Activated CD4-positive, alpha-beta T cell treated with anti-CD3 and anti-CD28 coated beads, Interleukin-2, amount 10 ng/mL, durations not matched to agents 24 days and 14 days (primary cell): ENCODE measurements at regions of chr13 and their contacts with region 1.

Region 1: DNA sequence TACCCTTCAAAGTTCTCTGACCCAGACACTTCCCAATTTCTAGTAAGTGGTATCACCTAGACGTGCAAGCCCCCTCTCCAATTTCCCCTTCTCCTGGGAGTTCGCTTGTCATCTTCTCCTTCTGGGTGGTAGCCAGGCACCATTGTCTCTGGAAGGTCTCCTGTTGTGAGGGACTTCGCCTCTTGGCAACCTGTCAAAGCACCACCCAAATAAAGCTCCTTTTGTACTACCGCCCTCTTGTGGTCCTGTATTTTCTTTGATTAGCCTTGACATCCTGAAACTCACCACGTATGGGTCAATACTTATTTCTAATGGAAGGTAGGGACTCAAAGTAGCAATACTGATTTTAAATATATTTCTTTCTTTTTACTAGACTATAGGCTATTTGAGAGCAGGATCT is 8.2 kb downstream of the GPC5 start:
- DNase-seq: peak; percentile 82
- H3K4me3 Mint-ChIP-seq: no peak overlapping the region
- H3K27ac Mint-ChIP-seq: no peak overlapping the region
- H3K4me1 Mint-ChIP-seq: no peaks in the 10 kb centered on the region
- H3K27me3 Mint-ChIP-seq: peaks cover 45% of the 10 kb centered on the region

Region 2: DNA sequence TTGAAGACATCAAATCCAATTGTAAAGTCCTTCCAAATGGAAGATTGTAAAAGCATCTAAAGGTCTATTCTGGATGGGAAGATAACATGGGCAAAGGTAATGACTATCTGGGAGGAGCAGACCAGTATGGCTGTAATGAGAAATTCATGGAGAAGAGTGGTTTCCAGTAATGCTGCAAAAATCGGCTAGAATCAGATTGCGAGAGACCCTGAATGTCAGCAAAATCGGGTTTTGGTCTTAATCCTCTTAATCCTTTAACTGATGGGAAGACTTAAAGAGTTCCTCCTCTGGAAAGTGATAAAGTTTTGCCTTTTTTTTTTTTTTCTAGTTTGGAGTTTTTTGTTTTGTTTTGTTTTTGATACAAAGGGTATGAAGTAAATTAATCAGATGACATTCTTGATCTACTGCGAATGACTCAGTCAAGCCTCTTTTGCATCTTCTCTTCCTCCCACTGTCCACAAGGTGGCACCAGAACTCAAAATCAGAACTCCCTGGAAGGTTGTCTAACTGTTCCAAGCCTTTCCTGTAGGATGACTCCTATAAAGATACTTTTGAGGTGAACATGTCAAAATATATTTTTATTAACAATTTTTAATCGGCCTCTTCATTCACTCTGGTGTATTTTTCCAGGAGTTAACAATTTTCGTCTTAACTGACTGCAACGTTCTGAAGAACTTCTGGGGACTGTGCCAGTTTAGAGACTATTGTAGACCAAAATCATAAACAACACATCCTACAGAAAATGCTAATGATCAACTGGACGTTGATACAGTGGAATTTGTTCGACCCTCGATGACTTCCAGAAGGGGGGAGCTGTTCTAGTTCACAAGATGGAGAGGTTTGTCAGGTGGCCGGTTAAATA is 272.4 kb before region 1 on chr13:
- intact Hi-C with region 1: loop called (anchors 1 kb)
- DNase-seq: peak; percentile 74
- H3K4me3 Mint-ChIP-seq: no peak overlapping the region
- H3K27ac Mint-ChIP-seq: no peak overlapping the region
- H3K4me1 Mint-ChIP-seq: no peaks in the 10 kb centered on the region
- H3K27me3 Mint-ChIP-seq: no peaks in the 10 kb centered on the region

Region 3: DNA sequence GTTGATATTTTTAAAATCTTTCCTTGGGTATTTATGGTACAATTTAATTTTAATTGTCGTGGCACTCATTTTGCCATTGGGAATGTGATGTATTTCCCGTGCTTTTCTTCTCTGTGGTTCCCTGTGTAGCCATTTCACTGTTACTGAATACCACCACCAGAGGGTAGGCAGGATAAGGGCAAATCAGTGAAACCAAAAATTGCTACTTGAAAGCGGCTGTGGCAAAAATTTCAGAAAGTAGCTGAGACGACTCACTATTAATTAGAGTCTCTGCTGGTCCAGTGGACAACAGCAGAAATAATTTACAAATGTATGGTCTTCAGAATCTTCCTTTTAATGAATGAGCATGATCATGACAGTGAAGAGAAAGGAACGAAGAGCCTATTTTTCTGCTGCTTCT is 93.5 kb before region 1 on chr13:
- intact Hi-C with region 1: loop called (anchors 1 kb)
- DNase-seq: peak; percentile 77
- H3K4me3 Mint-ChIP-seq: peak overlapping the region; percentile 52
- H3K27ac Mint-ChIP-seq: no peak overlapping the region
- H3K4me1 Mint-ChIP-seq: peaks cover 22% of the 10 kb centered on the region
- H3K27me3 Mint-ChIP-seq: peaks cover 14% of the 10 kb centered on the region

Region 4: DNA sequence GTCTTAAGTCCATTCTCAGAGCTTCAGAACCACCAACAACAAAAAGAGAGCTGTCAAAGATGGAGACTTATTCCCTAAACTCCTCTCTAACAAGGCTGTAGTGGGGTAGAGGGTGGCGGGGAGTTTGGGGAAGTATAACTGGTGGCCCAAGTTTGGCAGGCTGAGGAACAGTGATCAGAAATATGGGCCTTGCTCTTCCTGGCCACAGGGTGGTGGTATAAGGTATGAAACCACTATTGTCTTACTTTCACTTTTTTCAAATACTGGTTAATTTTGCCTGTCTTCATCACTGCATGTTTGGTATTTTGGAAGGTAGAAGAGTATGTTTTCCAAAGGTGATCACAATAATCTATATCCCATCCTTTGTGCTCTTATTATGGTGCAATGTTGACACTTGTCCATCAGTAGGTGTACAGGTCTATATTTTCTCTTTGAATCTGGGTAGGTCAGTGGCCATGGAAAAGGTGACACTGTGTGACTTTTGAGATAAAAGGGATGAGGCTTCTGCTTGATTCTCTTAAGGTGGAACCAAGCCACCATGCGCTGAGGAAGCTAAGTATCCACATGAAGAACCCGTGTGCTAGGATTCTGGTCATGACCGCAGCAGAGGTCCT is 31.4 kb before region 1 on chr13:
- intact Hi-C with region 1: loop called (anchors 1 kb)
- DNase-seq: peak; percentile 69
- H3K4me3 Mint-ChIP-seq: no peak overlapping the region
- H3K27ac Mint-ChIP-seq: no peak overlapping the region
- H3K4me1 Mint-ChIP-seq: peaks cover 2% of the 10 kb centered on the region
- H3K27me3 Mint-ChIP-seq: peaks cover 2% of the 10 kb centered on the region

Region 5: DNA sequence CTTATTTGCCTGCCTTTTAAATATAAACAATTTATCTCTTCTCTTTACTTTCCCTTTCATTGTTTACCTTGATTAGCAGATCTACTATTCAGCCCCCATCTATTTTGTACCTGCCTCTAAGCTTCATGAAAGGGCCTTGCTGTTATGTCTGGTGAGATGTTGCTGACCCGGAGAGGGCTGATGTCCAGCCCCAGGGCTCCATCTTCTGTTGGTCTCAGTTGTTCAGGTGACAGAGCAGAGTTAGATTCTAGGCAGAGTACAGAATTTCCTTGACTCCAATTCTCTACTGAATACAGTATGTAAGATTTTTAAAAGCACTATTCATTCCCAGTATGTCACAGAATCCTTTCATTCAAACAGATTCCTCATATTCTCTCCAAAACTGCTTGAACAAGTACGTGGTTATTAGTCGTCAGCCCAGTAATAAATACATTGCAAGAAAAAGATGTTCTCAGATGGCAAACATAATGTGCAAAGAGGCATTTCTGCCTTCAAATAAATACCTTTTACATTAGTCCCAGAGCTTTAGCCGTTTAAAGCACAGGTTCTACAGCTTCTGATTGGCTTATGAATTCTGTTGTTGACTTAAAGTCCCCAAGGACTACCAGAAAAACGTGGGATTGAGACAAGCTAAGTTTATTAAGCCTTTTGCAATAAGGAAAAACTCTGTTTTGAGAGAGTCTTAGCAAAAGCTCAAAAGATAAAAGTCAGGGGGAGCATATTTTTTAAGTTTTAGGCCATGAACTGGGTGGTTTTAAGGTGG is 150.9 kb after region 1 on chr13:
- intact Hi-C with region 1: no loop called
- DNase-seq: no peak
- H3K4me3 Mint-ChIP-seq: no peak overlapping the region
- H3K27ac Mint-ChIP-seq: no peak overlapping the region
- H3K4me1 Mint-ChIP-seq: no peaks in the 10 kb centered on the region
- H3K27me3 Mint-ChIP-seq: no peaks in the 10 kb centered on the region